Activated CD8-positive, alpha-beta memory T cell treated with anti-CD3 and anti-CD28 coated beads, Interleukin-2, amount 10 ng/mL, durations not matched to agents 7 days and 5 days (primary cell): ENCODE measurements at regions of chr1 and their contacts with region 1.

Region 1: DNA sequence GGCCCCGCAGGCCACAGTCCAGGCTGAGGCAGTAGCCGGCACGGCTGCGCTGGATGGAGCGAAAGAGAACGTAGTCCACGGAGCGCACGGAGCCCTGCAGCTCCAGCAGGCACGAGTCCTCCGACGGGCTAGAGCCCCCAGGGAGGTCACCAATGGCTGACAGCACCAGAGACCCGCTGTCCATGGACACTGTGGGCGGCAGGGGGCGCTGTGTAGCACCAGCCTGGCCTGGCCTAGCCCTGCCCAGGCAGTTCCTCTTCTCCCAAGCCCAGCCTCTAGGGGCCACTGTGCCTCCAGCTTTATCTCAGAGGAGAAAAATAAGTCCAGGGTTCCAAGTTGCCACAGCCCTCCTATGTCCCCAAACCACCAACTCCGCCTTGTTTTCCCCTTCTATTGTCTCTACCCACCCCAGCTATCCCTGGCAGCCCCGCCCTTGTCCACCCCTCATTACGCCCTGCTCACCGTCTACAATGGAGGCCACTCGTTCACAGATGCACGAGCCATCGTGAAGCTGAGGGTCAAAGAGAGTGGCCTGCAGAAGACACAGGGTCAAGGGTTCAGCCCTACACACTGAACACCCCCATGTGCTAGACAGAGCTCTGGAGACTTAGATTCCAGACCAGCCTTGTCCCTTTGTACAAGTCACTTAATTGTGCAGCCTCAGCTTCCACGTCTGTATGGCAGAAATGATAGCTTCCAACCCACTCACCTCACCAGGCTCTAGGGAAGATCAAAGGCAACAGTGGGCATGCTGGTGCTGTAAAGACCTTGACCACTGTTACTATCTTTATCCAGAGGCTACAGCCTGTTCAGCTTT is 4.4 kb downstream of the ENTREP3 start:
- DNase-seq: peak; percentile 98
- ATAC-seq: peak; percentile 97
- H3K4me3 Mint-ChIP-seq: peak overlapping the region; percentile 65
- H3K27ac Mint-ChIP-seq: peak overlapping the region; percentile 70
- H3K4me1 Mint-ChIP-seq: peaks cover 35% of the 10 kb centered on the region
- H3K27me3 Mint-ChIP-seq: no peaks in the 10 kb centered on the region

Region 2: GRCh38 chr1:155172732-155173477 is 77.9 kb before region 1 on chr1 and contains the start of gene KRTCAP2:
- CTCF ChIA-PET with region 1: interaction called, 11 read pairs
- DNase-seq: peak; percentile 98
- ATAC-seq: peak; percentile 84
- H3K4me3 Mint-ChIP-seq: peak within 1 kb of the TSS; percentile 82
- H3K27ac Mint-ChIP-seq: peak within 1 kb of the TSS; percentile 90
- H3K4me1 Mint-ChIP-seq: peaks cover 51% of the 10 kb centered on the region
- H3K27me3 Mint-ChIP-seq: no peaks in the 10 kb centered on the region
- total RNA-seq, gene KRTCAP2: 166 to 177 TPM

Region 3: DNA sequence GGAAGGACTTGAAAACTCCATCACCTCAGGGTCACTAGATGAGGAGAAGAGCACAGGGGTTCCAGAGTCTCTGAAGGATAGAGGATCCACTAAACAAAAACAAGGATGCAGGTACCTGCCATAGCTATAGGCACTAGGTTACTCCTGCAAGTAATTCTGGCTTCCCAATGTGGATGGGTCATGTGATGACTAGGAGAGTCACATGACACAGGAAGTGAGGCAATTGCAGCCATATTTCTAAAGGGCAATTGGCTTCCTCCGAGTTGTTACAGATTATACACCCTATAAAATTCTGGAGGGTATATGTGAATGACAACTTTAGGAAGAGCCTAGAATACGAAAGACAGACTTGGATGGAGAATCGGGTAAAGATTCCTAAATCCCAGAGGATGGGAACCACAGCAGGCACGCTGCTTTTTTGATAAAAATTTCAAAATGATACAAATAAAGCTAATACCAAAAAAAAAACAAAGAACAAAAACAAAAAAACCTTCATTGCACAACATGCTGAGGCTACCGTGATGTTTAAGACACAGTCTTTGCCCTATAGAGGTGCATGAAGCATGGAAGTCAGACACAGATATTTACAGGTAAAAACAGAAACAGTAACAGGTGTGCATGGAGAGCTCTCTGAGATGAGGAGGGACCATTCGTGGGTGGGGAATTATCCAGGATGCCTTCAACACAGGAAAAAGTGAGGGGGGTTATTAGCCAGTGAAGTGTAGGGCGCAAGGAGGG is 31.8 kb before region 1 on chr1:
- CTCF ChIA-PET with region 1: interaction called, 25 read pairs
- DNase-seq: no peak
- ATAC-seq: peak; percentile 44
- H3K4me3 Mint-ChIP-seq: no peak overlapping the region
- H3K27ac Mint-ChIP-seq: peak overlapping the region; percentile 80
- H3K4me1 Mint-ChIP-seq: peaks cover 37% of the 10 kb centered on the region
- H3K27me3 Mint-ChIP-seq: no peaks in the 10 kb centered on the region

Region 4: DNA sequence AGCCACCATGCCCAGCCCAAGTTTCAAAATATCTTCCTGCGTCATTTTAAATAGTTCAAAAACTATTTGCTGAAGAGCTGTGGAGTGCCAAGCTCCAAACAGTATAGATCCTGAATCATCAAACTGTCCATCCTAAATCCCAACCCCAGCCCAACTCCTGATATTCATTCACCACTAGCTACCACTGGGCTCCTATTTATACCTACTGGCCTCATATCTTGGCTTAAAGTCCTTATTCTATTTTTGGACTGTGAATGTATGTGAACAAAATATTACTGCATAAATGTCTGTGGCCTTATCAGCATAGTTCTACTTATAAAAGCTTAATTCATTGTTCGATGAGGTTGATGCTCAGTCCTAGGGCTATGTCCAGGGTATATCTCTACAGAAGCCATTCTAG is 16.5 kb after region 1 on chr1:
- CTCF ChIA-PET with region 1: interaction called, 97 read pairs
- DNase-seq: no peak
- ATAC-seq: no peak
- H3K4me3 Mint-ChIP-seq: no peak overlapping the region
- H3K27ac Mint-ChIP-seq: no peak overlapping the region
- H3K4me1 Mint-ChIP-seq: peaks cover 32% of the 10 kb centered on the region
- H3K27me3 Mint-ChIP-seq: no peaks in the 10 kb centered on the region

Region 5: GRCh38 chr1:155308493-155309422 is 57.9 kb after region 1 on chr1 and contains the start of gene FDPS:
- CTCF ChIA-PET with region 1: interaction called, 67 read pairs
- DNase-seq: peak; percentile 99
- ATAC-seq: peak; percentile 99
- H3K4me3 Mint-ChIP-seq: peak within 1 kb of the TSS; percentile 97
- H3K27ac Mint-ChIP-seq: peak within 1 kb of the TSS; percentile 96
- H3K4me1 Mint-ChIP-seq: peaks cover 42% of the 10 kb centered on the region
- H3K27me3 Mint-ChIP-seq: no peaks in the 10 kb centered on the region
- total RNA-seq, gene FDPS: 329 to 406 TPM

Region 6: GRCh38 chr1:155591770-155592169 is 340.9 kb after region 1 on chr1:
- CTCF ChIA-PET with region 1: interaction called, 23 read pairs
- DNase-seq: no peak
- ATAC-seq: peak; percentile 75
- H3K4me3 Mint-ChIP-seq: no peak overlapping the region
- H3K27ac Mint-ChIP-seq: no peak overlapping the region
- H3K4me1 Mint-ChIP-seq: peaks cover 3% of the 10 kb centered on the region
- H3K27me3 Mint-ChIP-seq: no peaks in the 10 kb centered on the region